ENCODE measurements at regions of chr5 and their contacts with region 1.

Region 1: DNA sequence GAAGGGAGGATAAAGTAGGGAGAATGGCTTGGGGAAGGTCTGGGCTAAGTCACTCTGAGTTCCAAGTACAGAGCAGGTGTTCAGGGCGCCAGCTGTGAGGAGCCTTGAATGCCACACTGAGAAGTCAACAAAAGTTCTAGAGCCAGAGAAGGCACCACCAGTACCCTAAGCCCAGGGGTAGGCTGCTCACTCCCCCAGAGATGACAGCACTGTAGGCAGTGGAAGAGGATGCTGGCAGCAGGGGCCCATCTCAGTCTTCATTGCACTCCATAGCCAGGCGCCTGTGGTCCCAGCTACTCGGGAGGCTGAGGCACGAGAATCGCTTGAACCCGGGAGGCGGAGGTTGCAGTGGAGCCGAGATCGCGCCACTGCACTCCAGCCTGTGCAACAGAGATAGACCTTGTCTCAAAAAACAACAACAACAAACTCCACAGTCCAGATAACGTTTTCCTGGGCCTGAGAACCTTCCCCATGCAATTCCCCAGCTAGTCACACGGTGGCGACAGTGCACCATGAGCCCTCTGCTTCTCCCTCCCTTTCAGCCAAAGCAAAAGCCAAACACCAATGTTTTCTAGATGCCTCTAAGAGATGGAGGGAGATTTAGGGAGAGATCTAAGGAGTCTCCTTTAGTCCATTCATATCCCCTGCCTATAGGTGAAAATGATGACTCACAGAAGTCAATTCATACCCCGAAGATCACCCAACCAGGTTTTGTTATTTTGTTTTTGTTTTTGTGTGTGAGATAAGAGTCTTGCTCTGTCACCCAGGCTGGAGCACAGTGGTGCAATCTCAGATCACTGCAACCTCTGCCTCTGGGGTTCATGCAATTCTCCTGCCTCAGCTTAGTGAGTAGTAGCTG is 19.8 kb upstream of the NSD1 start:
- DNase-seq: peak; percentile 65 to 90 (median 87)
- ATAC-seq: peak; percentile 20 to 61
- H3K4me3 ChIP-seq: no peak overlapping the region
- H3K27ac ChIP-seq: no peak overlapping the region
- H3K4me1 ChIP-seq: peaks cover 4% of the 10 kb centered on the region
- H3K27me3 ChIP-seq: no peaks in the 10 kb centered on the region

Region 2: DNA sequence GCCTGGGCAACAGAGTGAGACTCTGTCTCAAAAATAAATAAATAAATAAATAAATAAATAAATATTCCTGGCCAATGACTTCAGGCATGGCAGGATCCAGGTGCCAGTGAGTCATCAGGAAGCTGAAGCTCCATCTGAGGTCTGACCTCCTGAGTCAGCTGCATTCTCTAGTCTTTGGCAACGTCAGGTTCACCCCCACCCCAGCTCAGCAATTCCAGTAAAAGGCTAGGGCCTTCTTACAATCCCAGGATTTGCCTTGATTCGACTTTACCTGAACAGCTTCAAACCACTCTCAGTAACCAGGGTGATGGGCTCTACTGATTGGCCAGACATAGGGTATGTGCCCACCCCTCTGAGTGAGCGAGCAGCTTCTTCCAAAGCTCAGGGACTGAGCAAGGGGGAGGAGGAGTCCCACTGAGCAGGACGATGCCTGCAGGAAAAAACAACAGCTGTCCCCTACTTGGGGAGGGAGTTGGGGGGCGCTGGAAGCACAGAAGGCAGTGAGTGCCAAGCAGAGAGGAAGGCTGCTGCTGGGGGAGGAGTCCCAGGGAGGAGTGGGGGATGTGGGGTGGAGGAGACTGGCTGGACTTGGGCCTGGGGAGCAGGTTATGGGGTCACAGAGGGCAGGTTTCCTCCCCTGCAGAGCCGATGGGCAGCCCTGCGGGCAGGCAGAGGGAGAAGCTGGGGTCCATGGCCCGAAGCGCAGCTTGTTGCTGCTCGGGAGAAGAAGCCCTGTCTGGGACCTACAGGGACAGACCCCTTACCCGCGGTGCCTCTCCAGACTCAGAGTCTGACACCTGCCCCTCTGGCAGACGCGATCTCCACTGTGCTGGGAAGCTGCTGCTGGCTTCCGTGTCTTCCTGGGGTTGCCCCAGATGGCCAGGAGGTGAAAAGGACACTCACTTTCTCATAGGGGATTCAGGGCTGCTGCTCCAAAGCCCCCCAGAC is 329.3 kb before region 1 on chr5:
- intact Hi-C with region 1: no loop called
- DNase-seq: no peak
- ATAC-seq: no peak
- H3K4me3 ChIP-seq: no peak overlapping the region
- H3K27ac ChIP-seq: no peak overlapping the region
- H3K4me1 ChIP-seq: no peaks in the 10 kb centered on the region
- H3K27me3 ChIP-seq: no peaks in the 10 kb centered on the region

Region 3: GRCh38 chr5:177071666-177072385 is 42.0 kb before region 1 on chr5:
- intact Hi-C with region 1: loop called in 3 of 4 experiments (anchors 5 kb)
- DNase-seq: no peak
- ATAC-seq: peak; percentile 66 to 72
- H3K4me3 ChIP-seq: no peak overlapping the region
- H3K27ac ChIP-seq: no peak overlapping the region
- H3K4me1 ChIP-seq: no peaks in the 10 kb centered on the region
- H3K27me3 ChIP-seq: no peaks in the 10 kb centered on the region

Region 4: GRCh38 chr5:177256296-177256695 is 142.5 kb after region 1 on chr5:
- intact Hi-C with region 1: loop called in 2 of 4 experiments (anchors 5 to 10 kb)
- DNase-seq: no peak
- ATAC-seq: no peak
- H3K4me3 ChIP-seq: no peak overlapping the region
- H3K27ac ChIP-seq: no peak overlapping the region
- H3K4me1 ChIP-seq: no peaks in the 10 kb centered on the region
- H3K27me3 ChIP-seq: no peaks in the 10 kb centered on the region

Region 5: GRCh38 chr5:177303121-177303924 is 189.5 kb after region 1 on chr5 and contains the starts of genes PRELID1 and RAB24:
- intact Hi-C with region 1: loop called in 1 of 4 experiments (anchors 10 kb)
- DNase-seq: peak; percentile 91 to 97 (median 96)
- ATAC-seq: peak; percentile 79 to 86
- H3K4me3 ChIP-seq: peak within 1 kb of the TSS; percentile 69
- H3K27ac ChIP-seq: peak within 1 kb of the TSS; percentile 69
- H3K4me1 ChIP-seq: peaks cover 18% of the 10 kb centered on the region
- H3K27me3 ChIP-seq: no peaks in the 10 kb centered on the region
- total RNA-seq, gene PRELID1: 40.4 to 55.7 (median 46.0) TPM
- total RNA-seq, gene RAB24: 15.0 to 23.8 (median 20.6) TPM

Measured in right cardiac atrium (tissue), 5 donors.